ENCODE measurements at regions of chrX and their contacts with region 1.

Region 1: GRCh38 chrX:13013363-13014110 is 30.9 kb downstream of the FAM9C start:
- DNase-seq: no peak
- ATAC-seq: peak; percentile 87
- H3K4me3 ChIP-seq: peak overlapping the region; percentile 14
- H3K27ac ChIP-seq: peak overlapping the region; percentile 96
- H3K4me1 ChIP-seq: peaks cover 63% of the 10 kb centered on the region
- H3K27me3 ChIP-seq: no peaks in the 10 kb centered on the region
- CTCF ChIP-seq: no peak
- EP300 ChIP-seq: 0 out of 4 replicates have a peak, but pooled peaks of 1 of the 2 experiments have one; percentile 2
- POLR2A ChIP-seq: no peak
- RAD21 ChIP-seq: no peak

Region 2: GRCh38 chrX:12974796-12975669 is 38.5 kb before region 1 on chrX and contains the start of gene TMSB4X:
- CTCF ChIA-PET with region 1: interaction called, 6 read pairs
- POLR2A ChIA-PET with region 1: interaction called, 4 read pairs
- RAD21 ChIA-PET with region 1: interaction called, 525 read pairs
- SMC1A ChIA-PET with region 1: interaction called, 595 read pairs
- in situ Hi-C with region 1: no loop called
- intact Hi-C with region 1: no loop called
- DNase-seq: no peak
- ATAC-seq: peak; percentile 35
- H3K4me3 ChIP-seq: peak within 1 kb of the TSS; percentile 81
- H3K27ac ChIP-seq: peak within 1 kb of the TSS; percentile 90
- H3K4me1 ChIP-seq: peaks cover 6% of the 10 kb centered on the region; the same call in 1 of the 2 replicates
- H3K27me3 ChIP-seq: no peaks in the 10 kb centered on the region
- CTCF ChIP-seq: no peak
- EP300 ChIP-seq: no peak
- POLR2A ChIP-seq: peak; percentile 97
- RAD21 ChIP-seq: no peak
- polyA plus RNA-seq, gene TMSB4X: 32,576 to 35,408 TPM

Region 3: DNA sequence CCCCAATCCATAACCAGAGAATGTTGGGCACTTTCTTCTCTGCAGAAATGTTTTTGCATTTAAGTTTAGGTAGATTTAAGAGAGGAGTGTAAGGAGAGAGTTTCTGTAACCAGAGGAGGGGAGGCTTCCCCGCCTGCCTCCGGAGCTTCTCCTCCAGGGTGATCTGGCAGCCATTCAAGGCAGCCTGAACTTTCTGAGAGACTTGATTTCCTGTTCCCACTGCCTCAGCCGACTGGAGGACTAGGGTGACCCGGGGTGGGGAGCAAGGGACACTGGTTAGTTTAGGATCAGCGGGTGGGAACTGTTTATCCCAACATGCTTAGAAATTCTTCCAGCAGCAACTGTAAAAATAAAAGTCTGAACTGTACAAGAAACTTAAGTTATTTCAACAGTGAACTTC is 15.8 kb after region 1 on chrX:
- CTCF ChIA-PET with region 1: interaction called, 5 read pairs
- POLR2A ChIA-PET with region 1: interaction called, 25 read pairs
- RAD21 ChIA-PET with region 1: interaction called, 81 read pairs
- SMC1A ChIA-PET with region 1: interaction called, 189 read pairs
- in situ Hi-C with region 1: no loop called
- intact Hi-C with region 1: no loop called
- DNase-seq: no peak
- ATAC-seq: peak; percentile 21
- H3K4me3 ChIP-seq: no peak overlapping the region
- H3K27ac ChIP-seq: peak overlapping the region; percentile 83
- H3K4me1 ChIP-seq: peaks cover 45% of the 10 kb centered on the region
- H3K27me3 ChIP-seq: no peaks in the 10 kb centered on the region
- CTCF ChIP-seq: no peak
- EP300 ChIP-seq: no peak
- POLR2A ChIP-seq: no peak
- RAD21 ChIP-seq: no peak

Region 4: GRCh38 chrX:13140007-13140406 is 126.5 kb after region 1 on chrX:
- CTCF ChIA-PET with region 1: no interaction called
- POLR2A ChIA-PET with region 1: no interaction called
- RAD21 ChIA-PET with region 1: no interaction called
- SMC1A ChIA-PET with region 1: no interaction called
- in situ Hi-C with region 1: no loop called
- intact Hi-C with region 1: no loop called
- DNase-seq: no peak
- ATAC-seq: no peak
- H3K4me3 ChIP-seq: no peak overlapping the region
- H3K27ac ChIP-seq: no peak overlapping the region
- H3K4me1 ChIP-seq: no peaks in the 10 kb centered on the region
- H3K27me3 ChIP-seq: no peaks in the 10 kb centered on the region
- CTCF ChIP-seq: no peak
- EP300 ChIP-seq: no peak
- POLR2A ChIP-seq: no peak
- RAD21 ChIP-seq: no peak

Region 5: DNA sequence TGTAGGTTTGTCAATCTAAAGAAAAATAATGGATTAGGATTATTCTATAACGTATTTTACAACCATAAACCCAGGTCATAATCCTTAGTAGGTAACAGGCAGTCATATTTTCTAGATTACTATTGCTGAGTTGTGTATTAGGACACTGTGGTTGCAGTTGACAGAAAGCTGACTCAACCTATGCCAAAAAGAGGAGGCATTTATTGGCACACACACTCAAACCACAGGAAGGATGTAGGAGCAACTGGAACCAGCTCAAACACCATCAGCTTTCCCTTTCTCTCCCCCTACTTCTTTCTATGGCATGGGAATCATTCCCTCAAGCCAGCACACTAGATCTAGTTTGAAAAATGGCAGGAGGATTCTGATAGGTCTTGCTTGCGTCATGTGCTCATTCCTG is 167.3 kb after region 1 on chrX:
- CTCF ChIA-PET with region 1: no interaction called
- POLR2A ChIA-PET with region 1: no interaction called
- RAD21 ChIA-PET with region 1: no interaction called
- SMC1A ChIA-PET with region 1: no interaction called
- in situ Hi-C with region 1: no loop called
- intact Hi-C with region 1: no loop called
- DNase-seq: no peak
- ATAC-seq: no peak
- H3K4me3 ChIP-seq: no peak overlapping the region
- H3K27ac ChIP-seq: no peak overlapping the region
- H3K4me1 ChIP-seq: no peaks in the 10 kb centered on the region
- H3K27me3 ChIP-seq: no peaks in the 10 kb centered on the region
- CTCF ChIP-seq: no peak
- EP300 ChIP-seq: no peak
- POLR2A ChIP-seq: no peak
- RAD21 ChIP-seq: no peak